HepG2 (cell line): ENCODE measurements at regions of chr20 and their contacts with region 1.

Region 1: GRCh38 chr20:9407805-9408421 is 106.5 kb upstream of the LAMP5 start:
- DNase-seq: peak; percentile 65
- ATAC-seq: peak; percentile 98
- H3K4me3 ChIP-seq: no peak overlapping the region
- H3K27ac ChIP-seq: no peak overlapping the region
- H3K4me1 ChIP-seq: no peaks in the 10 kb centered on the region
- H3K27me3 ChIP-seq: no peaks in the 10 kb centered on the region
- CTCF ChIP-seq: peak; percentile 93
- EP300 ChIP-seq: no peak
- POLR2A ChIP-seq: no peak
- RAD21 ChIP-seq: peak; percentile 85

Region 2: DNA sequence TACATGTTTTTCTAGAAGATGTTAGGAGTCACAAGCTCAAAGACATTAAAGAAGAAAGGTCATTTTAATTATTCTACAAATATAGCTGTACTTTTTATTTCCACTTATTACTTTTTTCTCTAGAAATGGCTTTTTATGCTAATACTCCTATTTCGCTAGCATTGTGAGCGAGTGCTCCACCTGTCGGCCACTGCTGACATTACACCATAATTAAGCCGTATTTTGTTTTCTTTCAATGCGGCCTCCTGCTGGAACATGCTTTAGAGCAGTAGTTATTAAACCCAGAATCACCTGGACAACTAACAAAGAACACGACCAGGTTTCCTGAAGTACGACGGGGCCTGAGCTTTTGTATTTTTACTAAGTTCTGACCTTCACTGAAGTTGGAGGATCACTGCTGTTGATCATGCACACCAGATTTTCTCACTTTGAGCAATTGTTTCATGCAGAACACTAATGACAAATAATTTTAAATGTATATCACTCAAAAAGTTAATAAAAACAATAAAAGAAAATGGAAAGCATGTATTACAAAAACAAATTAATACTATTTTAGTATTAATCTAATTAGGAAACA is 505.0 kb after region 1 on chr20:
- CTCF ChIA-PET with region 1: interaction called, 4 read pairs
- POLR2A ChIA-PET with region 1: no interaction called
- in situ Hi-C with region 1: loop called (anchors 10 kb)
- intact Hi-C with region 1: loop called (anchors 1 kb)
- DNase-seq: peak; percentile 59
- ATAC-seq: peak; percentile 77
- H3K4me3 ChIP-seq: no peak overlapping the region
- H3K27ac ChIP-seq: no peak overlapping the region
- H3K4me1 ChIP-seq: no peaks in the 10 kb centered on the region
- H3K27me3 ChIP-seq: no peaks in the 10 kb centered on the region
- CTCF ChIP-seq: peak; percentile 82
- EP300 ChIP-seq: no peak
- POLR2A ChIP-seq: no peak
- RAD21 ChIP-seq: 0 out of 2 replicates have a peak, but pooled peaks have one; percentile 33

Region 3: GRCh38 chr20:10090588-10091166 is 682.8 kb after region 1 on chr20:
- CTCF ChIA-PET with region 1: no interaction called
- POLR2A ChIA-PET with region 1: no interaction called
- in situ Hi-C with region 1: loop called (anchors 25 kb)
- intact Hi-C with region 1: loop called (anchors 1 kb)
- DNase-seq: peak; percentile 63
- ATAC-seq: peak; percentile 99
- H3K4me3 ChIP-seq: no peak overlapping the region
- H3K27ac ChIP-seq: no peak overlapping the region
- H3K4me1 ChIP-seq: no peaks in the 10 kb centered on the region
- H3K27me3 ChIP-seq: no peaks in the 10 kb centered on the region
- CTCF ChIP-seq: peak; percentile 84
- EP300 ChIP-seq: no peak
- POLR2A ChIP-seq: no peak
- RAD21 ChIP-seq: peak; percentile 78